GM12878 (cell line): ENCODE measurements at regions of chr17 and their contacts with region 1.

Region 1: DNA sequence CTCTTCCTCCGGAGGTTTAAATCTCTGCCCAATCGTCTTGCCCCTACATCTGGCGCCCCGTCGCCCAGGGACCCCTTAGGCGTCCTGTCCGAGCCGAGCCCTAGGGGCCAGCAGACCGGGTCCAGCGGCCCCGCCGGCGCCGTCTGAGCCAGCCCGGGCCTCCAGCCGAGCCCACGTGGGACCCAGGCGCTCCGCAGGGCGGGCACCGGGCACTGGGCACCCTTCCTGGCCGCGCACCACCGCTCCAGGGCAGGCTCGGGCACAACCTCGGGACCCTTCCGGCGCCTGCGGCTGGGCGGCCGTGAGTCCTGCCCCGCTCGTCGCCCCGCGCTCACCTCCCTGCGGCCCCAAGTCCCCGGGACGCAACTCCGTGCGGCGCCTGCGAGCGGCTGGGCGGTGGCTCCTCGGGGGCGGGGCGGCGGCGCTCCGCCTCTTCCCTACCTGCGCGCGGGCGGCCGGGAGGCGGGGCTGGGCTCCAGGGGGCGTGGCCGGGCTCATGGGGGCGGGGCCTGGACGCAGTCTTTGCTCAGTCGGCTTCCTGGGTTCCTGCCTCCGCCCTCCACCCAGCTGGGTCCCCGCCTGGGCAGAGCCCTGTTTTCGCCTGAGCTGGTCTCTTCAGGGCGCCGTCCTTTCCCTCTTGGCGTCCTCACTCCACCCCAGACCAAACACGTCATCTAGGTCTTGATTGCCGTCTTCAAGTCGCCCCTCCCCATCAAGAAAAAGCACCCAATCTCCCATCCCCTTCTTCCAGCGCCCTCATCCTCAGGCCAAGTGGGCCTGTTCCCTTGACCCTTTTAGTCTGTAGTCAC is at the start of gene RHBDF2:
- DNase-seq: peak; percentile 62
- ATAC-seq: peak; percentile 83
- H3K4me3 ChIP-seq: peak within 1 kb of the TSS; percentile 96
- H3K27ac ChIP-seq: peak within 1 kb of the TSS; percentile 86
- H3K4me1 ChIP-seq: peaks cover 41% of the 10 kb centered on the region
- H3K27me3 ChIP-seq: no peaks in the 10 kb centered on the region
- CTCF ChIP-seq: no peak
- EP300 ChIP-seq: no peak
- POLR2A ChIP-seq: peak; percentile 85
- RAD21 ChIP-seq: no peak
- polyA plus RNA-seq, gene RHBDF2: 0.97 to 1.1 TPM

Region 2: GRCh38 chr17:76408052-76408849 is 93.0 kb before region 1 on chr17:
- CTCF ChIA-PET with region 1: interaction called, 26 read pairs
- POLR2A ChIA-PET with region 1: no interaction called
- RAD21 ChIA-PET with region 1: no interaction called
- SMC1A ChIA-PET with region 1: interaction called, 9 read pairs
- in situ Hi-C with region 1: loop called (anchors 5 kb)
- intact Hi-C with region 1: loop called (anchors 1 kb)
- DNase-seq: no peak
- ATAC-seq: peak; percentile 91
- H3K4me3 ChIP-seq: no peak overlapping the region
- H3K27ac ChIP-seq: no peak overlapping the region
- H3K4me1 ChIP-seq: peaks cover 20% of the 10 kb centered on the region
- H3K27me3 ChIP-seq: no peaks in the 10 kb centered on the region
- CTCF ChIP-seq: peak; percentile 87 to 96 (median 91)
- EP300 ChIP-seq: no peak
- POLR2A ChIP-seq: no peak
- RAD21 ChIP-seq: peak; percentile 82

Region 3: GRCh38 chr17:76481071-76481655 is 20.1 kb before region 1 on chr17:
- CTCF ChIA-PET with region 1: interaction called, 14 read pairs
- POLR2A ChIA-PET with region 1: interaction called, 101 read pairs
- RAD21 ChIA-PET with region 1: interaction called, 34 read pairs
- SMC1A ChIA-PET with region 1: interaction called, 115 read pairs
- in situ Hi-C with region 1: no loop called
- intact Hi-C with region 1: loop called (anchors 1 kb)
- DNase-seq: peak; percentile 71
- ATAC-seq: peak; percentile 82
- H3K4me3 ChIP-seq: peak overlapping the region; percentile 66
- H3K27ac ChIP-seq: peak overlapping the region; percentile 99
- H3K4me1 ChIP-seq: peaks cover 53% of the 10 kb centered on the region
- H3K27me3 ChIP-seq: no peaks in the 10 kb centered on the region
- CTCF ChIP-seq: no peak
- EP300 ChIP-seq: peak; percentile 69 to 74
- POLR2A ChIP-seq: peak; percentile 67
- RAD21 ChIP-seq: no peak

Region 4: GRCh38 chr17:76537578-76538280 is 36.5 kb after region 1 on chr17 and contains the start of gene CYGB:
- CTCF ChIA-PET with region 1: no interaction called
- POLR2A ChIA-PET with region 1: no interaction called
- RAD21 ChIA-PET with region 1: no interaction called
- SMC1A ChIA-PET with region 1: no interaction called
- in situ Hi-C with region 1: no loop called
- intact Hi-C with region 1: no loop called
- DNase-seq: no peak
- ATAC-seq: no peak
- H3K4me3 ChIP-seq: no peak within 1 kb of the TSS
- H3K27ac ChIP-seq: no peak within 1 kb of the TSS
- H3K4me1 ChIP-seq: no peaks in the 10 kb centered on the region
- H3K27me3 ChIP-seq: peaks cover 5 to 6% of the 10 kb centered on the region in 2 experiments
- CTCF ChIP-seq: no peak
- EP300 ChIP-seq: no peak
- POLR2A ChIP-seq: no peak
- RAD21 ChIP-seq: no peak
- polyA plus RNA-seq, gene CYGB: not detected